RWPE1 (cell line): ENCODE measurements at regions of chr5 and their contacts with region 1.

Region 1: DNA sequence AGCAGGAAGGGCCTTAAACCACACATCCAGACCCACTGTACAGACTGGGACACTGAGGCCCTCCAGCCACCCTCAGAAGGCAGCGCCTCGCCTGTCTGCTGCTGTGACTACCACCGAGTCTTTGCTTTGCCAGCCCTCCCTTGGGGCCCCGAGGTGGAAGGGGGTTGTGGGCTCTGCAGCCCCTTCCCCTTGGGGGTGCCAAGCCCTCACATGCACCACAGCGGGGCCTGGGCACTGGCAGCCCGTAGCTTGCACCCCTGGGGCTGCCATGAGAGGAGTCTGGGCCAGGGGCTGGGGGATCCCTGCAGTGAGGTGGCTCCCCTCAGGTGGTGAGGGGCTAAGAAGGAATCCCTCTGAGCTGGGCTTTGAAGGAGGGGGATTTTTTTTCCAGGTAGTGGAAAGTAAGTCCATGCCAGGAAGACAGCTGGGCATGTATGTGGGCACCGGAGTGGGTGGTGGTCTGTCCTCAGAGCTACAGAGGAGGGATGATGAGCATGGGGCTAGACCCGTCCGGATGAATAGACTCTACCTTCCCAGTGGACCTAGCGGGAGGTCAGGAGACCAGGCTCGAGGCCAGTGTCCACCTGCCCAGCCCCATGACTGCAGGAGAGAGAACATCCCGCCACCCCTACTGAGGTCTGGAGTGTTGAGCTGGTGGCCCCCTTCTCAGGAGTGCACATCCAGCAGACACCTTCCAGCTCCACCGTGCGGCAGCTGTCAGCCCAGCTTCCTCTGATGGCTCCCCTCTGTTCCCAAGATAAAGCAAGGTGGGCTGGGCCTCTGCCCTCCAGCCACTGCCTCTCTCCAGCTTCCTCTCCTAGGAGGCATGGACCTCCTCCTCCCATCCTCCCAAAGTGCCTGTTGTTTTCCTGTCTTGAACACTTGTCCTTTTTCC is 15.9 kb downstream of the FLT4 start:
- DNase-seq: no peak
- H3K27ac ChIP-seq: no peak overlapping the region
- CTCF ChIP-seq: no peak

Region 2: GRCh38 chr5:180034564-180034963 is 599.0 kb before region 1 on chr5:
- CTCF ChIA-PET with region 1: no interaction called
- POLR2A ChIA-PET with region 1: no interaction called
- DNase-seq: peak; percentile 36
- H3K27ac ChIP-seq: no peak overlapping the region
- CTCF ChIP-seq: no peak

Region 3: DNA sequence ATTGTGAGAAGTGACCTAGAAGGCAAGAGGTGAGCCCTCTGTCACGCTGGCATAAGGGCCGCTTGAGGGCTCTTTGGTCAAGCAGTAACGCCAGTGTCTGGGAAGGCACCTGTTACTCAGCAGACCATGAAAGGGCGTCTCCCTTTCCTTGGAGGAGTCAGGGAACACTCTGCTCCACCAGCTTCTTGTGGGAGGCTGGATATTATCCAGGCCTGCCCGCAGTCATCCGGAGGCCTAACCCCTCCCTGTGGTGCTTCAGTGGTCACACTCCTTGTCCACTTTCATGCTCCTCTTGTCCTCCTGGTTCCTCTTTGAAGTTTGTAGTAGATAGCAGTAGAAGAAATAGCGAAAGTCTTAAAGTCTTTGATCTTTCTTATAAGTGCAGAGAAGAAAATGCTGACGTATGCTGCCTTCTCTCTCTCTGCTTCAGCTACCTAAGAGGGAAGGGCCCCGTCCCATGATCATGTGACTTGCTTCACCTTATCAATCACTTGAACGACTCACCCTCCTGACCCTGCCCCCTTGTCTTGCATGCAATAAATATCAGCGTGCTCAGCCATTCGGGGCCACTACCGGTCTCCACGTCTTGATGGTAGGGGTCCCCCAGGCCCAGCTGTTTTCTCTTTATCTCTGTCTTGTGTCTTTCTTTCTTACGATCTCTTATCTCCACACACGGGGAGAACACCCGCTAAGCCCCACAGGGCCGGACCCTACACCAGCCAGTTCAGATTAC is 25.5 kb before region 1 on chr5:
- CTCF ChIA-PET with region 1: interaction called, 6 read pairs
- POLR2A ChIA-PET with region 1: interaction called, 10 read pairs
- DNase-seq: no peak
- H3K27ac ChIP-seq: no peak overlapping the region
- CTCF ChIP-seq: no peak

Region 4: DNA sequence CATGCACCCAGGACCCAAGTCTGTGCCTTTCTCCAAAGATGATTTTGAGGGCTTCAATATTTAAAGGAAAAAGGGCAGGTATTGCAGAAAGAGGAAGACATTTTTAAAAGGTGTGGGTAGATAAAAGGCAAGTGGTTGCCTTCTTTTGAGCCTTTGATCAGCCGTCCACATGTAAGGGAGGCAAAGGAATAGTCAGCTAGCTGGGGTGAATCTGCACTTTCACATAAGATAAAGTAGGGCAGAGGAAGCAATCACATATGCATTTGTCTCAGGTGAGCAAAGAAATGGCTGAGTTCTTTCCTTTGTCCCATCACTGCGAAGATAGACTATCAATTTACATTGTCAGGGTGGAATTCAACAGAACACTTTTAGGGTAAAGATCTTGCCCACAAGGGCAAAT is 149.2 kb after region 1 on chr5:
- CTCF ChIA-PET with region 1: no interaction called
- POLR2A ChIA-PET with region 1: no interaction called
- DNase-seq: no peak
- H3K27ac ChIP-seq: no peak overlapping the region
- CTCF ChIP-seq: no peak